Gastrocnemius medialis (tissue), 4 donors: ENCODE measurements at regions of chr6 and their contacts with region 1.

Region 1: GRCh38 chr6:152267967-152268845 is 369.0 kb downstream of the SYNE1 start:
- DNase-seq: no peak
- ATAC-seq: peak in 1 of 2 donors; percentile 11
- H3K4me3 ChIP-seq: peak overlapping the region in 1 of 4 donors; percentile 22
- H3K27ac ChIP-seq: peak overlapping the region; percentile 71 to 84 (median 78)
- H3K4me1 ChIP-seq: peaks cover 40 to 45% of the 10 kb centered on the region in 2 donors
- H3K27me3 ChIP-seq: no peaks in the 10 kb centered on the region
- CTCF ChIP-seq: peak; percentile 32 to 70 (median 47)
- POLR2A ChIP-seq: no peak

Region 2: GRCh38 chr6:151440930-151441329 is 827.3 kb before region 1 on chr6:
- in situ Hi-C with region 1: loop called in 1 of 4 experiments (anchors 25 kb)
- intact Hi-C with region 1: no loop called
- DNase-seq: no peak
- ATAC-seq: no peak
- H3K4me3 ChIP-seq: no peak overlapping the region
- H3K27ac ChIP-seq: peak overlapping the region in 1 of 4 donors; percentile 1
- H3K4me1 ChIP-seq: peaks cover 14 to 41% of the 10 kb centered on the region in 2 donors
- H3K27me3 ChIP-seq: no peaks in the 10 kb centered on the region
- CTCF ChIP-seq: peak in 2 of 5 experiments; percentile 14 to 32
- POLR2A ChIP-seq: no peak

Region 3: GRCh38 chr6:151675746-151676416 is 592.3 kb before region 1 on chr6:
- in situ Hi-C with region 1: loop called in 1 of 4 experiments (anchors 25 kb)
- intact Hi-C with region 1: loop called (anchors 5 kb)
- DNase-seq: no peak
- ATAC-seq: no peak
- H3K4me3 ChIP-seq: no peak overlapping the region
- H3K27ac ChIP-seq: no peak overlapping the region
- H3K4me1 ChIP-seq: no peaks in the 10 kb centered on the region
- H3K27me3 ChIP-seq: no peaks in the 10 kb centered on the region
- CTCF ChIP-seq: peak; percentile 63 to 80 (median 67)
- POLR2A ChIP-seq: no peak

Region 4: DNA sequence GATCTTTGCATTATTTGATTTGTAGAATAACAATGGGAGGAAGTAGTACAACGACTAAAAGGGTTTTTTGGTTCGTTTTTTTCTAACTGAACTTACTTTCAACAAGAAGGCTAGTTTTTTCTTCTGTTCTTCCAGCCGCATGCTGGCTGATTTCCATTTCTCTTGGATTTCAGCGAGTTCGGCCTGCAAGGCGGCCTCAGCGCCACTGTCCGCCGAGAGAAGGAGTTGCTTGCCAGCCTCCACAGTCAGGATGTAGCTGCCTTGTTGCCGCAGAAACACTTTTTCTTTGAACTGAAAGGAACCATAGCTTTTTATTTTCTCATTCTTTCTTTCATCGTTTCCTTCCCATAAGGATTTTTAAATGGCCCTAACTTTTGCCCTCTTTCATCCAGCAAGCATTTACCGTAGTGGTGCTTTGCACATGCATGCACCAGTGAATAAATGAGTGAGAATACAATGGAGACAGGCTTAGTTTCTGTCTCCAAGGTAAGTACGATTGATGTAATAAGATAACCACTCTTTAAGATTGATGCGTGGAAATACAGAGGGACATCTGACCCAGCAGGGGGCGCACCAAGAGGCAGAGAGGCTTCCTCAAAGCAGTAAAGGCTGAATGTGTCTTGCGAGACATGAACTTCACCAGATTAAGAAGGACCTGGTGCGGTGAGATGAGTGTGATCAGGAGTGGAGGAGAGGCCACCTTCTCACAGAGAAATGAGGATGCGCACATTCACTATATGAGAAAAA is 62.0 kb before region 1 on chr6:
- in situ Hi-C with region 1: no loop called
- intact Hi-C with region 1: loop called (anchors 2 kb)
- DNase-seq: peak in 1 of 2 donors; percentile 25
- ATAC-seq: peak in 1 of 2 donors; percentile 58
- H3K4me3 ChIP-seq: no peak overlapping the region
- H3K27ac ChIP-seq: no peak overlapping the region
- H3K4me1 ChIP-seq: no peaks in the 10 kb centered on the region
- H3K27me3 ChIP-seq: no peaks in the 10 kb centered on the region
- CTCF ChIP-seq: peak in 4 of 5 experiments; percentile 25 to 46 (median 33)
- POLR2A ChIP-seq: no peak

Region 5: GRCh38 chr6:152554851-152555250 is 286.6 kb after region 1 on chr6:
- in situ Hi-C with region 1: no loop called
- intact Hi-C with region 1: no loop called
- DNase-seq: no peak
- ATAC-seq: no peak
- H3K4me3 ChIP-seq: no peak overlapping the region
- H3K27ac ChIP-seq: no peak overlapping the region
- H3K4me1 ChIP-seq: no peaks in the 10 kb centered on the region
- H3K27me3 ChIP-seq: no peaks in the 10 kb centered on the region
- CTCF ChIP-seq: no peak
- POLR2A ChIP-seq: no peak